ENCODE measurements at regions of chr14 and their contacts with region 1.

Region 1: DNA sequence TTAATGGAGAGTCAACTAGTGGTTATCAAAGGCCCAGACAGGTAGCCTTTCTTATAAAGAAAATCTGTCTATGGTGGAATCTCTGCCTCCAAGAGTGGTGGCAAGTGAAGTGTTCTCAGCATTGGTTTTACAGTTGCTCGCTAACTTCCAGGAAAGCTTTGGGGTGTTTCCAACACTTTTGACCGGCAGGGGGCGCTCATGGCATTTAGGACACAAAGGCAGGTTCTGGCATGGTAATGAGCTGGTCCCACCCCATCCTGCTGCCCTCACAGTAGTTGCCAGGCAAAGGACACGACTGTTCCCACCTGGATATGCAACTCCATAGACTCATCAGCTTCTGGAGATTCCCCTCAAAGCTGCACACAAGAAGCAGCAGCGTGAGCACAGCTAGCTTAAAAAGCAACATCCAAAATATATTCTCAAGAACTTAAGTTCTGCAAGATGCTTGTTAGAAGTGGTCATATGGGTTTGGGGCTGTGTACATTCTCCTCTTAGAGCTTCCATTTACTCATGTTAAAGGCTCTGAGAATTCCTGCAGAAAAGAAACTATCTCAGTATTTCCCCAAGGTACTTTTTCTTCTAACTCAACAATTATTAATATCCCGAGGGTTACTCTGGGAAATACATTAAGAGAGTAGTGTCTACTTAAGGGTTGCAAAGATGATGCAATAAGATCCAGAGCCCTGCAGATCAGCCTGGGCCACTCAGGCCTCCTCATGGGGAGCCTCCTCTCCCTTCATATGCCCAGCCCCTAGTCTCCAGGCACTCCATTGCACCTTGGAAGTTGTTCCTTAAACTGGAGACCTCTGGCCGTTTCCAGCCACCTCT is 14.8 kb downstream of the PROX2 start:
- DNase-seq: no peak
- ATAC-seq: peak; percentile 97
- H3K4me3 ChIP-seq: no peak overlapping the region
- H3K27ac ChIP-seq: no peak overlapping the region
- H3K4me1 ChIP-seq: no peaks in the 10 kb centered on the region
- H3K27me3 ChIP-seq: no peaks in the 10 kb centered on the region
- CTCF ChIP-seq: peak; percentile 82 to 94 (median 88)
- EP300 ChIP-seq: no peak
- POLR2A ChIP-seq: no peak
- RAD21 ChIP-seq: peak; percentile 93

Region 2: GRCh38 chr14:74697543-74697942 is 163.6 kb before region 1 on chr14:
- CTCF ChIA-PET with region 1: no interaction called
- POLR2A ChIA-PET with region 1: no interaction called
- RAD21 ChIA-PET with region 1: no interaction called
- SMC1A ChIA-PET with region 1: no interaction called
- in situ Hi-C with region 1: no loop called
- intact Hi-C with region 1: no loop called
- DNase-seq: no peak
- ATAC-seq: no peak
- H3K4me3 ChIP-seq: no peak overlapping the region
- H3K27ac ChIP-seq: no peak overlapping the region
- H3K4me1 ChIP-seq: no peaks in the 10 kb centered on the region
- H3K27me3 ChIP-seq: no peaks in the 10 kb centered on the region
- CTCF ChIP-seq: no peak
- EP300 ChIP-seq: no peak
- POLR2A ChIP-seq: no peak
- RAD21 ChIP-seq: no peak

Region 3: GRCh38 chr14:74841230-74842207 is 19.6 kb before region 1 on chr14:
- CTCF ChIA-PET with region 1: interaction called, 106 read pairs
- POLR2A ChIA-PET with region 1: interaction called, 3 read pairs
- RAD21 ChIA-PET with region 1: interaction called, 6 read pairs
- SMC1A ChIA-PET with region 1: interaction called, 13 read pairs
- in situ Hi-C with region 1: no loop called
- intact Hi-C with region 1: no loop called
- DNase-seq: peak; percentile 77
- ATAC-seq: peak; percentile 95
- H3K4me3 ChIP-seq: peak overlapping the region; percentile 25; the same call in 1 of the 2 replicates
- H3K27ac ChIP-seq: peak overlapping the region; percentile 86
- H3K4me1 ChIP-seq: peaks cover 44% of the 10 kb centered on the region
- H3K27me3 ChIP-seq: no peaks in the 10 kb centered on the region
- CTCF ChIP-seq: no peak
- EP300 ChIP-seq: peak; percentile 47 to 74; a peak in 3 of 4 replicates
- POLR2A ChIP-seq: no peak
- RAD21 ChIP-seq: no peak

Region 4: DNA sequence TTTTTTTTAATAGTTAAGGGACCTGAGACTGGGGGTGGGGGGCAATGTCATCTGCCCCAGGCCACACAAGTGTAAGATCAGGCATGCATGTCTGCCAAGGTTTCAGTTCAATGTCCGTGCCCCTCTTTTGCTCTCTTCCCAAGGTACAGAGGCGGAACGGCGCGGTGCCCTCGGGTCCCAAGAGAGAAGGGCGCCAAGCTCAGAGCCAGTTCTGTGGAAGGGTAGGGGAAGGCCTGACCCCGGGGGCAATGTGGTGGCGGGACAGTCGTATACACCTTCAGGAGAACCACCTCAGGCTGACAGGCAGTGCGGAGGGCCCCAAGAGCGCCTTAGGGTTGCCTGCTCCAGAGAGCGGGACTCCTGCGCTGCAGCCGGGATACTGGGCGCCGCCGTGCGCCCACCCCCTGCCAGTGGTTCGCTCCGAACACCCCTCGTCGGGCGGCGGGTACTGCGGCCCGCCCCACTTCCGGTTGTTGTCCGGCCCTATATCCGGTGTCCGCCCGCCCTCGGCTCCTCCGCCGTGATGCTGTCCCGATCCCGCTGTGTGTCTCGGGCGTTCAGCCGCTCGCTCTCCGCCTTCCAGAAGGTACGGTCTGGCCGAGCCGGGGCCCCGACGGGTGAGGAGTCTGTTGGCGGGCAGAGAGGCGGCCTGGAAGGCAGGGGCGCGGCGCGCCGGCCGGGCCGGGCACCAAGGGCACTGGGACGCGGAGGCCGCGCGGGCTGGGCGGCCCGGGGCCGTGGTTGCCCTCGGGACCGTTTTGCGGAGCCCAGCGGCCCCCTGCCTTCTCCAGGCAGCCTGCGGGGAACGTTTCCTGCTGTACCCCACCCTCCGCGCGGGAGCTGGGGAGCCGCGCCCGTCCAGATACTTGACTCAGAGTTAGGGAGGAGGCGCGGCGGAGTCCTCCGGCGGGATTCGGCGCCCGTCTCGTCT is 20.6 kb after region 1 on chr14 and contains the start of gene DLST:
- CTCF ChIA-PET with region 1: interaction called, 289 read pairs
- POLR2A ChIA-PET with region 1: interaction called, 10 read pairs
- RAD21 ChIA-PET with region 1: interaction called, 10 read pairs
- SMC1A ChIA-PET with region 1: interaction called, 30 read pairs
- in situ Hi-C with region 1: no loop called
- intact Hi-C with region 1: no loop called
- DNase-seq: peak; percentile 39
- ATAC-seq: peak; percentile 94
- H3K4me3 ChIP-seq: peak within 1 kb of the TSS; percentile 90
- H3K27ac ChIP-seq: peak within 1 kb of the TSS; percentile 81
- H3K4me1 ChIP-seq: peaks cover 8% of the 10 kb centered on the region
- H3K27me3 ChIP-seq: no peaks in the 10 kb centered on the region
- CTCF ChIP-seq: no peak
- EP300 ChIP-seq: no peak
- POLR2A ChIP-seq: peak; percentile 95
- RAD21 ChIP-seq: no peak
- polyA plus RNA-seq, gene DLST: 2.9 to 12.2 TPM

Region 5: GRCh38 chr14:74934476-74935359 is 73.6 kb after region 1 on chr14:
- CTCF ChIA-PET with region 1: interaction called, 11 read pairs
- POLR2A ChIA-PET with region 1: no interaction called
- RAD21 ChIA-PET with region 1: interaction called, 3 read pairs
- SMC1A ChIA-PET with region 1: interaction called, 6 read pairs
- in situ Hi-C with region 1: no loop called
- intact Hi-C with region 1: no loop called
- DNase-seq: no peak
- ATAC-seq: peak; percentile 53
- H3K4me3 ChIP-seq: no peak overlapping the region
- H3K27ac ChIP-seq: no peak overlapping the region
- H3K4me1 ChIP-seq: peaks cover 19% of the 10 kb centered on the region
- H3K27me3 ChIP-seq: no peaks in the 10 kb centered on the region
- CTCF ChIP-seq: no peak
- EP300 ChIP-seq: no peak
- POLR2A ChIP-seq: no peak
- RAD21 ChIP-seq: no peak

Region 6: GRCh38 chr14:75063407-75064213 is 202.5 kb after region 1 on chr14 and contains the start of gene ACYP1:
- CTCF ChIA-PET with region 1: interaction called, 13 read pairs
- POLR2A ChIA-PET with region 1: no interaction called
- RAD21 ChIA-PET with region 1: interaction called, 3 read pairs
- SMC1A ChIA-PET with region 1: interaction called, 7 read pairs
- in situ Hi-C with region 1: no loop called
- intact Hi-C with region 1: no loop called
- DNase-seq: peak; percentile 56
- ATAC-seq: peak; percentile 98
- H3K4me3 ChIP-seq: peak within 1 kb of the TSS; percentile 98
- H3K27ac ChIP-seq: peak within 1 kb of the TSS; percentile 60
- H3K4me1 ChIP-seq: peaks cover 5% of the 10 kb centered on the region
- H3K27me3 ChIP-seq: no peaks in the 10 kb centered on the region
- CTCF ChIP-seq: no peak
- EP300 ChIP-seq: no peak
- POLR2A ChIP-seq: peak; percentile 82
- RAD21 ChIP-seq: no peak
- polyA plus RNA-seq, gene ACYP1: 48.5 to 49.4 TPM

Region 7: GRCh38 chr14:75301666-75302325 is 440.7 kb after region 1 on chr14:
- CTCF ChIA-PET with region 1: interaction called, 19 read pairs
- POLR2A ChIA-PET with region 1: no interaction called
- RAD21 ChIA-PET with region 1: interaction called, 3 read pairs
- SMC1A ChIA-PET with region 1: interaction called, 8 read pairs
- in situ Hi-C with region 1: no loop called
- intact Hi-C with region 1: loop called (anchors 10 kb)
- DNase-seq: no peak
- ATAC-seq: peak; percentile 29; the same call in 1 of the 3 replicates
- H3K4me3 ChIP-seq: no peak overlapping the region
- H3K27ac ChIP-seq: no peak overlapping the region
- H3K4me1 ChIP-seq: no peaks in the 10 kb centered on the region
- H3K27me3 ChIP-seq: no peaks in the 10 kb centered on the region
- CTCF ChIP-seq: no peak
- EP300 ChIP-seq: no peak
- POLR2A ChIP-seq: no peak
- RAD21 ChIP-seq: no peak

Measured in GM12878 (cell line).